Common myeloid progenitor, CD34-positive (primary cell): ENCODE measurements at regions of chr1 and their contacts with region 1.

Region 1: DNA sequence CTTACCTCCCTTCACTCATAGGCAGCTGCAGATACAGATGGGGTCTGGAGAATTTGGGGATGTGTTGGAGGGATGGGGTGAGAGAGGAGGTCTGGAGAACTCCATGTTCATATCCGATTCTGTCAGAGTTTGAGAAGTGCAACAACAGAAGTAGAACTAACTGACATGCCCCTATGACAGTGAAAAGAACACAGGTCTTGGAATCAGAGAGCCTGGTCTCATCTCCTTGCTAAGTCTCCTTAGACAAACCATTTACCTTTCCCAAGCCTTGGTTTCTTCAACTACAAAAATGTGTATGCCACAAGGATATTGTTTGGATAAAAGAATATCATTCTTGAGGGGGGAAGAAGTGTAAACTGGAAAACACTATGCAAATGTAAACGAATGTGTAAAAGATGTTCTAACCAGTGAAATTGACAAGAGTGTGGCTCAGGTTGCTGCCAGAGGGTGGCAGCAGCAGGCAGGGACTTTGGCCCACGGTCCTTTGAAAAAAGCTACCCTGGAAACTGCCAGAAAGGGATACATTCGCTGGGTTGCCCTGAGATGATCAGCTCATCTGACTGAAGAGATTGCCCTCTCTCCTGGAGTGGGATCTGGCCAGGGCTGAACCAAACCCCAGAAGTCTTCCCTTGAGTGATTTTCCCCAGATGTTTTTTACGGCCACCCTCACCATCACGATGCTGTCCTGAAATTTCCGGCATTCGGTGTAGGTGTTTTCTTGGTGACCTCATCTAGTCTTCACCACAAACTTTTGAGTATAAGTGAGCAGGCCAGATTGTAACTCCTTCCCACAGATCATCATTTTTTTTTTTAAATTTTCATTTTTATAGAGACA is 17.0 kb upstream of the CD2 start:
- DNase-seq: peak; percentile 57 to 83 (median 76)
- H3K4me3 ChIP-seq: no peak overlapping the region
- H3K27ac ChIP-seq: no peak overlapping the region
- H3K4me1 ChIP-seq: peaks cover 0 to 39% (median 23%) of the 10 kb centered on the region in 4 experiments
- H3K27me3 ChIP-seq: no peaks in the 10 kb centered on the region

Region 2: GRCh38 chr1:116605315-116605714 is 131.9 kb before region 1 on chr1:
- CTCF ChIA-PET with region 1: no interaction called
- POLR2A ChIA-PET with region 1: no interaction called
- DNase-seq: no peak
- H3K4me3 ChIP-seq: no peak overlapping the region
- H3K27ac ChIP-seq: no peak overlapping the region
- H3K4me1 ChIP-seq: peaks cover 0 to 7% (median 1%) of the 10 kb centered on the region in 4 experiments
- H3K27me3 ChIP-seq: peaks cover 0 to 23% (median 2%) of the 10 kb centered on the region in 5 experiments

Region 3: GRCh38 chr1:116724765-116725375 is 12.4 kb before region 1 on chr1:
- CTCF ChIA-PET with region 1: interaction called, 44 read pairs
- POLR2A ChIA-PET with region 1: no interaction called
- DNase-seq: peak; percentile 69 to 79 (median 71)
- H3K4me3 ChIP-seq: no peak overlapping the region
- H3K27ac ChIP-seq: no peak overlapping the region
- H3K4me1 ChIP-seq: peaks cover 0 to 6% (median under 1%) of the 10 kb centered on the region in 4 experiments
- H3K27me3 ChIP-seq: no peaks in the 10 kb centered on the region

Region 4: DNA sequence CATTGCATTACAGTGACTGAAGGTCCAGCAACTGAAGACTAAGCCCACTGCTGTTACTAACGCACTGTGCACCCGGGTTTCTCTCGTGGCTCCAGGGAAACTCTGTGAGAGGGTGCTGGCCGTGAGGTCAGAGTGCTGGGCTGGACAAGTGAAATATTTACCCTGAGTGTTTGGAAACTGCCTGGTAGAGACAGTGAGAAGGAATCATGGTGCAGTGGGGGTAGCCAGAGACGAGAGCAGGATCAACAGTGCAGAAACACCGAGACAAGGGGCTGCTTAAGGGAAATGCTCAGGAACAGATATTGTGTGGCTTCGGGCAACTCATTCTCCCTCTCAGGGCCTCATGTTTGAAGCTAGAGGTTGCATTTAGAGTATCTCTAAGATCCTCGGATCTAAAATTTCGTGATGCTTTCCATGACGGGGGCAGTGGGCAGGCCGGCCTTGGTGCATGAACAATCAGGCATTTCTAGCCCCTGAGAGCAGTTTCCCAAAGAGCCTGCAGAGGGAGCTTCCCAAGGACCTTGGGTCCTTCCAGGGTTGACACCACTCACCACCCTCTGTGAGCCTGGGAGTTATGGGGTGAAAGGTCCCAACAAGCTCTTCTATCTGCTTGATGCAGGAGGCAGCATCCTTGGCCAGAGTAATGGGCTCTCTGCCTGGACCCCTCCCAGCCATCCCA is 26.7 kb after region 1 on chr1:
- CTCF ChIA-PET with region 1: interaction called, 35 read pairs
- POLR2A ChIA-PET with region 1: no interaction called
- DNase-seq: no peak
- H3K4me3 ChIP-seq: no peak overlapping the region
- H3K27ac ChIP-seq: no peak overlapping the region
- H3K4me1 ChIP-seq: peaks cover 14 to 44% (median 22%) of the 10 kb centered on the region in 4 experiments
- H3K27me3 ChIP-seq: no peaks in the 10 kb centered on the region

Region 5: DNA sequence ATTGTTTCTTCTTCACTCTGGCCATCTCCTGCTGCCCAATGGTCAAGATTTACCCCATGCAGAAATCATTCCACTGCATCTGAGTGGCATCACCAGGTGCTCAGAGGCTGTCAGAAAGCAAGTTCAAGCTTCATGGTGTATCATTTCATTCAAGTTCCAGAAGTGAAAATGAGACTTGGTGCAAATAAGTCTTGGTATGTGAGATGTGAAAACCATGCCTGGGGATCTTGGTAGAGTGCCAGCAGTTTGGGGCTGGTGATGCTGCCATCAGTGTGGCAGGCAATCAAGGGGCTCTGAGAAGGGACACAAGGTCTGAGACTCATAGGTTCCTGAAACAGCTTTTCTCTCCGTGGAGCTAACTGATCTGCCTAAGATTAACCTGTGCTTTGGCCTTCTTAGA is 69.0 kb after region 1 on chr1:
- CTCF ChIA-PET with region 1: interaction called, 10 read pairs
- POLR2A ChIA-PET with region 1: interaction called, 3 read pairs
- DNase-seq: peak in 2 of 3 donors; percentile 40 to 53
- H3K4me3 ChIP-seq: no peak overlapping the region
- H3K27ac ChIP-seq: no peak overlapping the region
- H3K4me1 ChIP-seq: peaks cover 0 to 18% (median under 1%) of the 10 kb centered on the region in 4 experiments
- H3K27me3 ChIP-seq: no peaks in the 10 kb centered on the region

Region 6: GRCh38 chr1:116881879-116882520 is 144.8 kb after region 1 on chr1:
- CTCF ChIA-PET with region 1: interaction called, 41 read pairs
- POLR2A ChIA-PET with region 1: no interaction called
- DNase-seq: peak; percentile 39 to 47 (median 42)
- H3K4me3 ChIP-seq: no peak overlapping the region
- H3K27ac ChIP-seq: no peak overlapping the region
- H3K4me1 ChIP-seq: peaks cover 6 to 30% (median 26%) of the 10 kb centered on the region in 4 experiments
- H3K27me3 ChIP-seq: no peaks in the 10 kb centered on the region

Region 7: DNA sequence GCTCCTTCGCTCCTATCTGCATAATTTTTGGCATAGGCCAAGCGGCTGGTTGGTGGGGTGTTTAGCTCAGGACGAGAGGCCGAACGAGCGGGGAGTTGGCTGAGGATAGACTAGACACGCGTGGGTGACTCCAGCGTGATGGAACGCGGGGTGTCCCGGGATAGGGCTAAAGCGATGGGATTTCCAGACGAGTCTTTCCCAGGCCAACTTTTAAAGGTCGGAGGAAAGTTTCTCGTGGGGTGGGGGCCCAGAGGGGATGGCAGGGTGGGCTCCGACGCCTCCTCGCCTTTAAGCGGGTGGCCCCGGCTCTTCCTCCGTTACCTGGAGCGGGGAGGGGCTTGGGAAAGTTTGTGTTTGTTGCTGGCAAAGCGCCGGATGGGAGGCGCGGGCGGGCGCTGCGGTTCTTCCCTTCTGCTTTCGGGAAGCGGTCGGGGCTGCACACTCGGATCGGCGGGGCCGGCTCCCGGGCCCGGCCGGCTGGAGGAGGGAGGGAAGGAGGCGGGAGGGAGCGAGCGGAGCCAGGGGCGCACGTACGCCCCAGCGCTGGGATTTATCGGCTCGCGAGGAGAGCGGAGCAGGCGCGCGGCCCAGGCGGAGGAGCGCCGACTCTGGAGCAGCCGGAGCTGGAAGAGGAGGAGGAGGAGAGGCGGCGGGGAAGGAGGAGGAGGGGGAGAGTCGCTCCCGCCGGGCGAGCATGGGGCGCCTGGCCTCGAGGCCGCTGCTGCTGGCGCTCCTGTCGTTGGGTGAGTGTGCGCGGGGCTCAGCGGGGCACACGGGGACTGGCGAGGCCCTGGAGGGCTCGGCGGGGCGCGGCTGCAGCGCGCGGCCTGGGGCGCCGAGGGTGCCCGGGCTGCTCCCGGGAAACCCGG is 172.5 kb after region 1 on chr1 and contains the start of gene PTGFRN:
- CTCF ChIA-PET with region 1: no interaction called
- POLR2A ChIA-PET with region 1: no interaction called
- DNase-seq: peak; percentile 2 to 41 (median 15)
- H3K4me3 ChIP-seq: peak within 1 kb of the TSS; percentile 29 to 73 (median 60)
- H3K27ac ChIP-seq: no peak within 1 kb of the TSS
- H3K4me1 ChIP-seq: peaks cover 0 to 15% (median 14%) of the 10 kb centered on the region in 4 experiments
- H3K27me3 ChIP-seq: peaks cover 3 to 53% (median 33%) of the 10 kb centered on the region in 5 experiments